GM18951 (cell line): ENCODE measurements at regions of chr21 and their contacts with region 1.

Region 1: DNA sequence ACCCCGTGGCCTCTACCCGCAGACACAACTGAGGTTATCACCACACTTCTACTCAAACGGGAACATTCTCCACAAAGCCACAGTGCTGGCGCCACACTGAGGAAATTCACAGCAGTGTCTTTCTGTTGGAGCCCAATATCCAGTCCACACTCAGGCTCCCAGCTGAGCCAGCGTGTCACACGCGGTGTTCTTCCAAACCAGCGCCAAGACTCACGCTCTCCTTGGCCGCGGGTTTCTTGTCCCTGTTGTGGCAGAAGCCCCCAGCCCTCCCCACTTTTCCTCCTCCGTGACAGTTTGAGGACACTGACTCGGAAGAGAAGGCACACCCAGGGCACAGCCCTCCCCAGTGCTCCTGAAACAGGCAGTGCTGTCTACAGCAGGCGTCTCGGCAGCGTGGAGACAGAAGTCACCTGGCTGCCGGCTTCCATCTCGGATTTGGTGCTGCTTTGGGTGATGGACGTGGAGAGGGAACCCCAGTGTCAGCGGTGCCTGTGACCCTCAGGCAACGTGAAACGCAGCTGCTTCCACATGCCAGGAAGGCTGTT is 35.4 kb upstream of the AGPAT3 start:
- POLR2A ChIP-seq: no peak

Region 2: GRCh38 chr21:43789276-43790009 is 40.2 kb before region 1 on chr21 and contains the start of gene RRP1:
- in situ Hi-C with region 1: no loop called
- POLR2A ChIP-seq: peak; percentile 95

Region 3: GRCh38 chr21:43939443-43940328 is 110.0 kb after region 1 on chr21:
- in situ Hi-C with region 1: loop called (anchors 10 kb)
- POLR2A ChIP-seq: no peak